ENCODE measurements at regions of chr10 and their contacts with region 1.

Region 1: DNA sequence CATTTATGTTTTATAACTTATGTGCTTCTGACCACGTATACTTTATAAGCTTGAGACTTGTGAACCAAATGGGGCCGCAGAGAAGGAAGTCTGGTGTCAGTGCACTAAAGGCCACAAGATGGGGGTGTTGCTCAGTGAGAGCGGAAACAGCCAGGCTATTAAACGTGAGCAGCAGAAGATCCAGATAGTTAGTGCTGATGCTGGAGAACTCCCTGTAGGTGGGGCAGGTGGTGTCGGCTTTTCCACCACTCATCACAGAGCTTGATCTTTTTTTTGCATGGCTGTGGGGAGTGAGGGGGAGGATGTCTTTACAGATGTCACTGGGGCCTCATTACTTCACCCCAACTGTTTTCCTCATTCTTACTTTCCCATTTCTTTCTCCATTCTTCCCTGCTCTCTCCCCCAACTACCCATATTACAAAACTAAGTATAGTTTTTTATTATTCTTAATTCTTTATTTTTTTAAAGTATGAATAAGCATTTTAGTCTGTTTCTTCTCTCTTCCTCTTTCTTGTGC is 34.7 kb downstream of the ACADSB start:
- DNase-seq: peak; percentile 62 to 72 (median 69)
- ATAC-seq: peak; percentile 98
- H3K4me3 ChIP-seq: no peak overlapping the region
- H3K27ac ChIP-seq: no peak overlapping the region
- H3K4me1 ChIP-seq: no peaks in the 10 kb centered on the region
- H3K27me3 ChIP-seq: no peaks in the 10 kb centered on the region
- CTCF ChIP-seq: peak; percentile 77 to 80 (median 77)
- EP300 ChIP-seq: no peak
- POLR2A ChIP-seq: no peak
- RAD21 ChIP-seq: peak; percentile 83 to 86

Region 2: GRCh38 chr10:123109466-123109865 is 66.0 kb after region 1 on chr10:
- CTCF ChIA-PET with region 1: no interaction called
- POLR2A ChIA-PET with region 1: no interaction called
- in situ Hi-C with region 1: no loop called
- intact Hi-C with region 1: loop called (anchors 5 kb)
- DNase-seq: no peak
- ATAC-seq: peak; percentile 74
- H3K4me3 ChIP-seq: no peak overlapping the region
- H3K27ac ChIP-seq: no peak overlapping the region
- H3K4me1 ChIP-seq: no peaks in the 10 kb centered on the region; a peak in 1 of 5 replicates
- H3K27me3 ChIP-seq: peaks cover 0 to 20% of the 10 kb centered on the region in 2 experiments; a peak in 2 of 5 replicates
- CTCF ChIP-seq: no peak
- EP300 ChIP-seq: no peak; the same call in 1 of the 2 replicates
- POLR2A ChIP-seq: no peak
- RAD21 ChIP-seq: no peak

Region 3: DNA sequence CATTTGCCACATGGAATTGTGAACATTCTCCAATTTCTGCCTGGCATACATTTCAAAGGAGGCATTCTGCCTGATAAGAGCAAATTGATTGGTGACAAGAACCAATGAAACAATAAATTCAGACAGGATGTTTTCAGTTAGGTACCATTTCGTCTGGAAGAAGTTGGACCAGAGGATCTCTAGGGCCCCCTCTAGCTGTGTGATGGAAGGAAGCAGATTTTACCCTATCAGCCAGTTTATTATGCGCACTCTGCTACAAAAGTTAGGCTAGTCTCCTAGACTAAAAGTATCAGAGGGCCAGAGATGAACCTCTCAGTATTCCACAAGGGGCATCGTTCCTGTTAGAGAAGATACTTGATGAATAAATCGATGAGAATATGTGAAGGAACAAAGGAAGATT is 228.7 kb after region 1 on chr10:
- CTCF ChIA-PET with region 1: no interaction called
- POLR2A ChIA-PET with region 1: no interaction called
- in situ Hi-C with region 1: no loop called
- intact Hi-C with region 1: loop called (anchors 10 kb)
- DNase-seq: peak in 1 of 4 experiments; percentile 11
- ATAC-seq: no peak
- H3K4me3 ChIP-seq: no peak overlapping the region
- H3K27ac ChIP-seq: no peak overlapping the region
- H3K4me1 ChIP-seq: no peaks in the 10 kb centered on the region
- H3K27me3 ChIP-seq: peaks cover 7 to 24% of the 10 kb centered on the region in 2 experiments; a peak in 3 of 5 replicates
- CTCF ChIP-seq: peak; percentile 25 to 37 (median 37); a peak in 4 of 6 replicates
- EP300 ChIP-seq: no peak
- POLR2A ChIP-seq: no peak
- RAD21 ChIP-seq: 0 out of 4 replicates have a peak, but pooled peaks of 1 of the 2 experiments have one; percentile 19

Region 4: GRCh38 chr10:123552760-123553554 is 509.5 kb after region 1 on chr10:
- CTCF ChIA-PET with region 1: interaction called, 28 read pairs
- POLR2A ChIA-PET with region 1: no interaction called
- in situ Hi-C with region 1: loop called (anchors 5 kb)
- intact Hi-C with region 1: no loop called
- DNase-seq: peak; percentile 33 to 53 (median 41)
- ATAC-seq: peak; percentile 85
- H3K4me3 ChIP-seq: no peak overlapping the region
- H3K27ac ChIP-seq: no peak overlapping the region
- H3K4me1 ChIP-seq: peaks cover 0 to 2% of the 10 kb centered on the region in 2 experiments; a peak in 1 of 5 replicates
- H3K27me3 ChIP-seq: peaks cover 0 to 20% of the 10 kb centered on the region in 2 experiments; a peak in 2 of 5 replicates
- CTCF ChIP-seq: no peak
- EP300 ChIP-seq: no peak
- POLR2A ChIP-seq: no peak
- RAD21 ChIP-seq: no peak

Region 5: GRCh38 chr10:123967396-123968243 is 924.2 kb after region 1 on chr10:
- CTCF ChIA-PET with region 1: no interaction called
- POLR2A ChIA-PET with region 1: no interaction called
- in situ Hi-C with region 1: loop called (anchors 25 kb)
- intact Hi-C with region 1: no loop called
- DNase-seq: peak; percentile 54 to 74 (median 73)
- ATAC-seq: peak; percentile 90
- H3K4me3 ChIP-seq: no peak overlapping the region
- H3K27ac ChIP-seq: no peak overlapping the region
- H3K4me1 ChIP-seq: no peaks in the 10 kb centered on the region
- H3K27me3 ChIP-seq: peaks cover 0 to 2% of the 10 kb centered on the region in 2 experiments; a peak in 2 of 5 replicates
- CTCF ChIP-seq: peak; percentile 77 to 80 (median 77)
- EP300 ChIP-seq: no peak
- POLR2A ChIP-seq: no peak
- RAD21 ChIP-seq: peak; percentile 83 to 87